ENCODE measurements at regions of chr7 and their contacts with region 1.

Region 1: DNA sequence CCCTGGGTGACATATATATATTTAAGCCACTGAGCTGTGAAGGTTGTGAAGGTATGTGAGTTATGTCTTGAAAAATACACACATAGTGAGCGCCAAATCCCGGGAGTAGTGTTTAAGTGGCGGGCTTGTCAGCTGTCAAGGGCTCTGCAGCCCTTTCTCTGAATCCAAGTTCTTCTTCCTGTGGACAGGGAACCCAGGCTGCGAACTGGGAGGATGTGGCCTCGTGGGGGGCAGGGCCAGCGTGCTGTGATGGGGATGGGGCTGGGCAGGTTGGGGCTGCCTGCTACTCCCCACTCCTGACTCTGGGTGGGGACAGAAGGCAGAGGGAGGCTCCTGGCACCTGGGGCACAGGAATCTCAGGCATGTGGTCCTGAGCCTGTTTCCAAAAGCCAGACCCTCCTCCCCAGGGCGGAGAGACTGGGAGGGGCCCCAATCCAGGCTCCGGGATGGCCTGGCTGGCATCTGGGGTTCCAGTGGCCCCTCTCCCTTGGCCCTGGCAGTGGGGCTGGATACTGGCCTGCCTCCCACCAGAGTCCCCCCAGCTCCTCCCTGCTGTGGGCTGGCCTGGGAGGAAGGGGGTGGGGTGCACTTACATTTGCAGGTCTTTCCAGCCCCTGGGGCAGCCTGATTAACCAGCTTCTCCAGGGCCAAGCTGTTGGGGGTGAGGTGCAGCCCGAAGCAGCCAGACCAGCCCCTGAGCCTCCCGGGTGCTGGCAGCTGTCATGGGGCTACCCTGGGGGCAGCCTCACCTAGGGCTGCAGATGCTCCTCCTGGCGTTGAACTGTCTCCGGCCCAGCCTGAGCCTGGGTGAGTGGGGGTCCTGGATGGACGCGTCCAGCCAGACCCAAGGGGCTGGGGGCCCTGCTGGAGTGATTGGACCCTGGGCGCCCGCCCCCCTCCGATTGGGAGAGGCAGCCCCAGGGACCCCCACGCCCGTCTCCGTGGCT is at the start of gene UPK3B:
- DNase-seq: no peak
- ATAC-seq: no peak
- H3K4me3 ChIP-seq: no peak within 1 kb of the TSS
- H3K27ac ChIP-seq: no peak within 1 kb of the TSS
- H3K4me1 ChIP-seq: peaks cover 0 to 10% (median 4%) of the 10 kb centered on the region in 12 donors
- H3K27me3 ChIP-seq: no peaks in the 10 kb centered on the region
- CTCF ChIP-seq: no peak
- POLR2A ChIP-seq: no peak
- total RNA-seq, gene UPK3B: 0.32 to 238 (median 0.63) TPM in 3 of 9 donors, not detected in the others

Region 2: DNA sequence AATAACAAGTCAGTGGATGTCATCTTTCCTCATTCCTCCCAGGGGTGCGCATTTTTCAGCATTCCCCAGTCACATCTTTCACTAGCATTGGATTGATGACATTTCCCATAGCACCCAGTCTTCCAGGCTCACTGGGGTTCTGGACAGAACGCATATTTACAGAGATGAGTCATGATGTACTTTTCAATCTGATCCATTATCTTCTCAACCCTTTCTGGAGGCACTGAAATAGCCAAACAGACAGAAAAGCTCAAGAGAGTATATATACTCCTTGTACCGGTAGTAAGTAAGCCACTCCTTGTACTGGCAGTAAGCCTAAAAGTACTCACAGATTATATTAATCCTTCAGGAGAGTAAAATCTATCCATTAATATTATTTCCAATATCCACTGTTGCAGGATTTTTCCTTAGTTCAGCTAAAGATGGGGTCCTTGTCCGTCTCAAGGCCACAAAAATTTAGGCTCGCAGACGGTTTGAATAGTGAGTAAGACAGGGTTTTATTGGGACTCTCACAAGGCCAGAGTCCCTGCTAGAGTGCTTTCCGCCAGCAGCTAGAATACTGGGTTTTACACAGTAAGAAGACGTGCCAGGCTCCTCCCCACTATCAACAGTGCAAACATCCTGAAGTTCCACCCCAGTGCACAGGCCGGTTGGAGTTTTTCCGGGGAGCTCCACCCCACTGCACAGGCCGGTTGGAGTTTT is 401.5 kb before region 1 on chr7:
- intact Hi-C with region 1: no loop called
- DNase-seq: peak in 2 of 5 donors; percentile 18 to 38
- ATAC-seq: peak in 3 of 4 donors; percentile 61 to 75 (median 66)
- H3K4me3 ChIP-seq: no peak overlapping the region
- H3K27ac ChIP-seq: peak overlapping the region in 3 of 12 donors; percentile 4 to 14 (median 6)
- H3K4me1 ChIP-seq: peaks cover 0 to 6% (median 0%) of the 10 kb centered on the region in 12 donors
- H3K27me3 ChIP-seq: no peaks in the 10 kb centered on the region
- CTCF ChIP-seq: no peak
- POLR2A ChIP-seq: no peak

Region 3: DNA sequence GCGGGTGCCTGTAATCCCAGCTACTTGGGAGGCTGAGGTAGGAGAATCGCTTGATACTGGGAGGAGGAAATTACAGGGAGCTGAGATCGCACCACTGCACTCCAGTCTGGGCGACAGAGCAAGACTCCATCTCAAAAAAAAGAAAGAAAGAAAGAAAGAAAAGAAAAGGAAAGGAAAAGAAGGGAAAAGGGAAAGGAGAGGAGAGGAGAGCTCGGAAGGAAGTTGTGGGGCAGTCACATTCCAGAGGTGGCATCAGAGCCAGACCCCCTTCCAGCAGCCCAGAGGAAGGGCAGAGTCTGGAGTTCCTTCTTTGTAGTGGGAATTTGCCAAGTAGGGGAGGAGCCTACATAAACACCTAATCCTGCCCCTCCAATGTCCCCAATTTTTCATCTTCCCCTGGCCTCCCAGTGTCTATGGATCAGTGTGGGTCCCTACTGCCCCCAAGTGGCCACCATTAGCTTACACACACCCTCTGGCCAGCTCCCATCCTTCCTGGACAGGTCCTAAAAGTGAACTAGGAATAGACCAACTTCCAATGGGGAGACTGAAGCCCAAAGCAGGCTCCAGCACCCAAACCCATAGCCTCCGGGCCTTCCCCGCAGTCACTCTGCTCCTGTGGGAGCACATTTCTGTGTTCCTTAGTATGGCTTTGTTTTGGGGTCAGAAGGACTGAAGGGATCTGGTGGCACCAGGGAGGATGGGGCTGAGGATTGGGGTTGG is 247.4 kb before region 1 on chr7:
- intact Hi-C with region 1: no loop called
- DNase-seq: peak in 1 of 5 donors; percentile 54
- ATAC-seq: peak; percentile 67 to 91 (median 80)
- H3K4me3 ChIP-seq: no peak overlapping the region
- H3K27ac ChIP-seq: no peak overlapping the region
- H3K4me1 ChIP-seq: peaks cover 0 to 21% (median 7%) of the 10 kb centered on the region in 12 donors
- H3K27me3 ChIP-seq: peaks cover 19 to 44% (median 36%) of the 10 kb centered on the region in 9 donors
- CTCF ChIP-seq: peak; percentile 31 to 70 (median 56)
- POLR2A ChIP-seq: no peak

Region 4: GRCh38 chr7:76997381-76997780 is 487.2 kb after region 1 on chr7:
- intact Hi-C with region 1: loop called in 3 of 10 experiments (anchors 10 kb)
- DNase-seq: peak in 1 of 5 donors; percentile 40
- ATAC-seq: peak; percentile 16 to 33 (median 23)
- H3K4me3 ChIP-seq: no peak overlapping the region
- H3K27ac ChIP-seq: no peak overlapping the region
- H3K4me1 ChIP-seq: no peaks in the 10 kb centered on the region
- H3K27me3 ChIP-seq: no peaks in the 10 kb centered on the region
- CTCF ChIP-seq: no peak
- POLR2A ChIP-seq: no peak